MCF 10A (cell line): ENCODE measurements at regions of chr15 and their contacts with region 1.

Region 1: DNA sequence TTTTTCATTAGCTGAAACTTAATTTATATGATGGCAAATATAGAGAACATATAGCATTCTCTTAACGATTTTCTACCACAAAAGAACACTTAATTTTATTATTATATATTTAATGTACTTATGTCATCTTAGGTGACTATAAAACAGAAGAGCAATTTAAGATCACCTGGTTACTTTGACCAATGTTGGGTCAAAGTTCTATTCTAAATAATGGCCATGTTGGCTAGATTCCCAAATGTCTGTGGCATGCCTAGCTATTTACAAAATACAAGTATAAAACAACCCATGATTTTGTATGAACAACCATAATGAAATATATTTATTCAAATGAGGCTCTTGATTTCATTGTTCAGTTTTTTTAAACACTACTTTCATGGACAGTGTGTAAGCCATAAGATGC is 200.9 kb downstream of the MCTP2 start:
- DNase-seq: no peak
- H3K4me3 Mint-ChIP-seq: no peak overlapping the region
- H3K27ac Mint-ChIP-seq: no peak overlapping the region
- H3K4me1 Mint-ChIP-seq: no peaks in the 10 kb centered on the region
- H3K27me3 Mint-ChIP-seq: no peaks in the 10 kb centered on the region
- CTCF ChIP-seq: no peak

Region 2: GRCh38 chr15:94297558-94297957 is 134.7 kb before region 1 on chr15:
- CTCF ChIA-PET with region 1: no interaction called
- POLR2A ChIA-PET with region 1: no interaction called
- intact Hi-C with region 1: no loop called
- DNase-seq: no peak
- H3K4me3 Mint-ChIP-seq: no peak overlapping the region
- H3K27ac Mint-ChIP-seq: no peak overlapping the region
- H3K4me1 Mint-ChIP-seq: peaks cover 10% of the 10 kb centered on the region
- H3K27me3 Mint-ChIP-seq: no peaks in the 10 kb centered on the region
- CTCF ChIP-seq: no peak

Region 3: DNA sequence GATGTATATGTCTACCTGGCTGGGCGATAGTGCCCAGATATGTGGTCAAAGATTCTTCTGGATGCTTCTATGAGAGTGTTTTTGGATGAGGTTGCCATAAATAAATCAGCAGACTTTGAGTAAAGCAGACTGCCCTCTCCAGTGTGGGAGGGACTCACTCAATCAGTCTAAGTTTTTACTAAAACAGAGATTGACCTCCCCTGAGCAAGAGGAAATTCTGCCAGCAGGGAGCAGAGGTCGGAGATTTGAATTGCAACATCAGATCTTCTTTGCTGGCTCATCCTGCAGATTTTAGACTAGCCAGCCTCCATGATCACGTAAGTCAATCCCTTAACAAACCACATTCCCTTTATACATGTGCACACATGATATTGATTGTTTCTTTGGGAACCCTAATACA is 99.9 kb after region 1 on chr15:
- CTCF ChIA-PET with region 1: no interaction called
- POLR2A ChIA-PET with region 1: no interaction called
- intact Hi-C with region 1: loop called (anchors 10 kb)
- DNase-seq: no peak
- H3K4me3 Mint-ChIP-seq: no peak overlapping the region
- H3K27ac Mint-ChIP-seq: no peak overlapping the region
- H3K4me1 Mint-ChIP-seq: no peaks in the 10 kb centered on the region
- H3K27me3 Mint-ChIP-seq: no peaks in the 10 kb centered on the region
- CTCF ChIP-seq: no peak

Region 4: GRCh38 chr15:94683902-94684301 is 251.6 kb after region 1 on chr15:
- CTCF ChIA-PET with region 1: no interaction called
- POLR2A ChIA-PET with region 1: no interaction called
- intact Hi-C with region 1: no loop called
- DNase-seq: no peak
- H3K4me3 Mint-ChIP-seq: no peak overlapping the region
- H3K27ac Mint-ChIP-seq: no peak overlapping the region
- H3K4me1 Mint-ChIP-seq: no peaks in the 10 kb centered on the region
- H3K27me3 Mint-ChIP-seq: no peaks in the 10 kb centered on the region
- CTCF ChIP-seq: no peak